ENCODE measurements at regions of chr6 and their contacts with region 1.

Region 1: DNA sequence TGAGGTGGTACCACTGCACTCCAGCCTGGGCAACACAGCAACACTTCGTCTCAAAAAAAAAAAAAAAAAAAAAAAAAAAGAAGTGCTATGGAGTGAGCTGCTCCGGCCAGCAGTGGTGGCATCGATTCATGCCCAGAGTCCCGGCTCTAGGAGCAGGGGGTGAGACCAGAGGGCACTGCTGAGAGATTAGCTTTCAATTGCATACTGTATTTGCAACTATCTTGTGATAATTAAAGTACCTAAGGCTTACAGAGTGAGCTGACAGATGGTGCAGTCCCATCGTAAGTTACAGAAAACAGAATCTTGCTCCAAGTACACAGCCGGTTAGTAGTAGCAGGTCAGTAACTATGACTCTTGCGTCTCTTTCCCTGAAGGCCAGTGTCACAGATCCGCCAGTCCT is 31.5 kb downstream of the TMEM14B start:
- DNase-seq: no peak
- H3K4me3 ChIP-seq: no peak overlapping the region
- H3K27ac ChIP-seq: no peak overlapping the region
- H3K4me1 ChIP-seq: no peaks in the 10 kb centered on the region
- H3K27me3 ChIP-seq: no peaks in the 10 kb centered on the region
- CTCF ChIP-seq: no peak

Region 2: DNA sequence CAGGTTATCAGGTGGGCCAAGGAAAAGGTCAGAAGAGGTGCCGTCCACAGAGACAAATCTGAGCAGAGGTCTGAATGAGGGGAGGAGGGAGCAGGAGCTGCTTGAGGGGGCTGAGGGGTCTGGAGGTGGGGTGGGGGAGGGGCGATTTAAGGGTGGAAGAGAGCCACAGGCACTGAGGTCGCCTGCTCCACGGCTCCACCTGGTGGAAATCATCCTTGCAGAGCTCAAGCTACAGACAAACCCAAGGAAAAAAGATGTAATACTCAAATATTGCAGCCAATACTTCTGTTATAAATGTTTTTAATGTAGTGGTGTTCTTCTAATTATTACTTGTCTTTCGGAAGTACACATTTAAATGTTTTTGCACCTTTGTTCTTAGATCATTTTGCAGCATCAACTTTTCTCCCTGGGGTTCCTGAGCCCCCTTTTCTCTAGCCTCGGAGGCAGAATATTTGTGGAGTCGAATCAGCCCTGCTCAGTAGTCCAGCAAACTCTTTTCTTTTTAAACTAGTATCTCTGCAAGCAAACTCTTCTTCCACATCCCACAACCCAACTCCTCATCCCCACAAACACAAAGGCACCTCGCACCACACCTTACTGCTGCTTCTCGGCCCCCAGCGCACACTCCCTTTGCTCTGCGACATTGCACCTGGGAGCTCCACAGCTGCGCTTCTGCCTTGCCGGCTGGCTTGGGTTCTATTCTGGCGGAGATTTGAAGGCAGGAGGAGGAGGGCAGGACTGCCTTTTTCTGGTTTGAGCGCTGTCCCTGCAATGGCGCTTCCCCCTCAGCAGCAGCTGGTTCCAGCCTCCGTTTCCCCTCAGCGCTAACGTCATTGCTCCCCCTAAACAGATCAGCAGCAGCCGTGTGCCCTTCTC is 313.2 kb before region 1 on chr6:
- CTCF ChIA-PET with region 1: no interaction called
- POLR2A ChIA-PET with region 1: no interaction called
- intact Hi-C with region 1: no loop called
- DNase-seq: peak; percentile 67
- H3K4me3 ChIP-seq: no peak overlapping the region
- H3K27ac ChIP-seq: no peak overlapping the region
- H3K4me1 ChIP-seq: no peaks in the 10 kb centered on the region
- H3K27me3 ChIP-seq: no peaks in the 10 kb centered on the region
- CTCF ChIP-seq: peak; percentile 70

Region 3: GRCh38 chr6:10722820-10723566 is 56.1 kb before region 1 on chr6 and contains the start of gene TMEM14C:
- CTCF ChIA-PET with region 1: no interaction called
- POLR2A ChIA-PET with region 1: no interaction called
- intact Hi-C with region 1: no loop called
- DNase-seq: peak; percentile 96
- H3K4me3 ChIP-seq: peak within 1 kb of the TSS; percentile 70
- H3K27ac ChIP-seq: peak within 1 kb of the TSS; percentile 85
- H3K4me1 ChIP-seq: peaks cover 15% of the 10 kb centered on the region
- H3K27me3 ChIP-seq: no peaks in the 10 kb centered on the region
- CTCF ChIP-seq: no peak
- total RNA-seq, gene TMEM14C: 68.3 and 75.1 TPM in 2 replicates

Region 4: GRCh38 chr6:11431455-11431937 is 652.4 kb after region 1 on chr6:
- CTCF ChIA-PET with region 1: no interaction called
- POLR2A ChIA-PET with region 1: interaction called, 20 read pairs
- intact Hi-C with region 1: no loop called
- DNase-seq: no peak
- H3K4me3 ChIP-seq: no peak overlapping the region
- H3K27ac ChIP-seq: no peak overlapping the region
- H3K4me1 ChIP-seq: peaks cover 24% of the 10 kb centered on the region
- H3K27me3 ChIP-seq: no peaks in the 10 kb centered on the region
- CTCF ChIP-seq: no peak